A549 (cell line): ENCODE measurements at regions of chr2 and their contacts with region 1.

Region 1: GRCh38 chr2:165969227-165969626 is 15.7 kb upstream of the TTC21B start:
- DNase-seq: no peak
- ATAC-seq: no peak
- H3K4me3 ChIP-seq: no peak overlapping the region
- H3K27ac ChIP-seq: no peak overlapping the region
- H3K4me1 ChIP-seq: no peaks in the 10 kb centered on the region
- CTCF ChIP-seq: no peak
- EP300 ChIP-seq: no peak
- POLR2A ChIP-seq: no peak
- RAD21 ChIP-seq: no peak; a peak in 1 of 5 replicates

Region 2: GRCh38 chr2:165529130-165529529 is 440.1 kb before region 1 on chr2:
- CTCF ChIA-PET with region 1: no interaction called
- POLR2A ChIA-PET with region 1: no interaction called
- DNase-seq: no peak
- ATAC-seq: no peak
- H3K4me3 ChIP-seq: no peak overlapping the region
- H3K27ac ChIP-seq: no peak overlapping the region
- H3K4me1 ChIP-seq: no peaks in the 10 kb centered on the region
- CTCF ChIP-seq: no peak
- EP300 ChIP-seq: no peak
- POLR2A ChIP-seq: no peak
- RAD21 ChIP-seq: no peak

Region 3: DNA sequence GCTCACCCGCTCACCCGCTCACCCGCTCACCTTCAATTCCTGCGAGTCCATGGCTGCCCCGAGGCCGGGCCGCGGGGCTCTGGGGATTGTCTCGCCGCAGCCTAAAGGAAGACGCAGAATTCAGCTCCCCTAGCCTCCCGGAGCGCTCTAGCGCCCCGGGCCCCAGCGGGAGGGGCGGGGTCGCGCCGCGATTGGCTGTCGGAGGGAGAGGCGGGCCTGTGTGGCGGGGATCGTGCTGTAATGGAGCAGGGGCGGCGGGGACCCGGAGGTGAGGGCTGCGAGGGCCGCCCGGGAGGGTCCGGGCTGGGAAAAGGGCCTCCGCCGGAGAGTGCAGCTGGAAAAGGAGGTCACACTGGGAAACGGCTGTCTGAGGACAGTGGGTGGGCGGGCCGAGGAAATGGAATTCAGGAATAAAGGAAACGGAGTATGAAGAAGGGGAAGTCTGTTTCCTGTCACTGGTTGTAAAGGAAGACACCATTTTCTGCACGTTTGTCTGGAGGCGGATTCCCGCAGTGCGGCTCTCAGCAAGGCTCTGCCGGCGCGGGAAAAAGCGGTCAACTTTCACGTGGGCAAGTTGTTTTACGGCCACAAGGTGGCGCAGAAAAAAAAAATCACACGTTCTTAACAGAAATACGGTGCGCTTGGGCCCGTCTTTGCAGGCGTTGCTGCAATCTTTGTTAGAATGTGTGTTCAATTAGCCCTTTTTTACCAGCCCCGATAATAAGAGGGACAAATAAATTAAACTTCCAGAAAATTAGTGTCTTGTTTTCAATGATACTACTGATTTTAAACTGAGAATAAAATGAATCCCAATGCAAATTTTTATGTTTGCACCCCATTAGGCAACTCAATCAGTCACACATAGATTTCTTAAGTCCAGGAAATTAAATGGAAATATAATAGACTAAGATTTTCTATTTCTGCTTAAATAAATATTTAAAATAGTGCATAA is 15.3 kb before region 1 on chr2 and contains the start of gene TTC21B:
- CTCF ChIA-PET with region 1: interaction called, 10 read pairs
- POLR2A ChIA-PET with region 1: no interaction called
- DNase-seq: peak; percentile 74 to 95
- ATAC-seq: peak; percentile 98
- H3K4me3 ChIP-seq: peak within 1 kb of the TSS; percentile 63
- H3K27ac ChIP-seq: peak within 1 kb of the TSS; percentile 79 to 94
- H3K4me1 ChIP-seq: peaks cover 17% of the 10 kb centered on the region; the same call in 2 of the 3 replicates
- CTCF ChIP-seq: peak; percentile 78
- EP300 ChIP-seq: no peak
- POLR2A ChIP-seq: peak; percentile 52
- RAD21 ChIP-seq: peak; percentile 41 to 64
- polyA plus RNA-seq, gene TTC21B: 17.5 and 23.3 TPM in 2 replicates